ENCODE measurements at regions of chr9 and their contacts with region 1.

Region 1: GRCh38 chr9:125200210-125201047 is at the start of gene RABEPK:
- DNase-seq: peak; percentile 97
- total RNA-seq, gene RABEPK: 9.4 TPM

Region 2: DNA sequence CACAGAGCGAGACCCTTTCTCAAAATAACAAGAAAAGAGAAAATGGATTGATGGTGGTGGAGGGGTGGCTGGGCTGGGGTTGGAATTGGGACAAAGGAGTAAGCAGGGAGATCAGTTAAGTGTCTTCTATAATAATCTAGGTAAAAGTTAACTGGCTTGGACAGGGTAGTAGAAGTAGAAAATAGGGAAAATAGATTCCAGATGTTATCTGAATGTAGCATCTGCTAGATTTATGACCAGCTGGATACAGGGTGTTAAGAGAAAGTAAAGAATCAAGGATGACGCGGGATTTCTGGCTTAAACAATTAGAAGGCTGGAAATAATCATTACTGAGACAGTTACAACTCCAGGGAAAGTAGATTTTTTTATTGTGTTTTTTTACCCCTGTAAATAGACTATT is 23.8 kb before region 1 on chr9:
- intact Hi-C with region 1: no loop called
- DNase-seq: no peak

Region 3: GRCh38 chr9:125241000-125241862 is 40.8 kb after region 1 on chr9 and contains the start of gene HSPA5:
- intact Hi-C with region 1: loop called (anchors 5 kb)
- DNase-seq: peak; percentile 99
- total RNA-seq, gene HSPA5: 284 TPM

Measured in cardiac septum (tissue), 1 donor.